ENCODE measurements at regions of chr18 and their contacts with region 1.

Region 1: DNA sequence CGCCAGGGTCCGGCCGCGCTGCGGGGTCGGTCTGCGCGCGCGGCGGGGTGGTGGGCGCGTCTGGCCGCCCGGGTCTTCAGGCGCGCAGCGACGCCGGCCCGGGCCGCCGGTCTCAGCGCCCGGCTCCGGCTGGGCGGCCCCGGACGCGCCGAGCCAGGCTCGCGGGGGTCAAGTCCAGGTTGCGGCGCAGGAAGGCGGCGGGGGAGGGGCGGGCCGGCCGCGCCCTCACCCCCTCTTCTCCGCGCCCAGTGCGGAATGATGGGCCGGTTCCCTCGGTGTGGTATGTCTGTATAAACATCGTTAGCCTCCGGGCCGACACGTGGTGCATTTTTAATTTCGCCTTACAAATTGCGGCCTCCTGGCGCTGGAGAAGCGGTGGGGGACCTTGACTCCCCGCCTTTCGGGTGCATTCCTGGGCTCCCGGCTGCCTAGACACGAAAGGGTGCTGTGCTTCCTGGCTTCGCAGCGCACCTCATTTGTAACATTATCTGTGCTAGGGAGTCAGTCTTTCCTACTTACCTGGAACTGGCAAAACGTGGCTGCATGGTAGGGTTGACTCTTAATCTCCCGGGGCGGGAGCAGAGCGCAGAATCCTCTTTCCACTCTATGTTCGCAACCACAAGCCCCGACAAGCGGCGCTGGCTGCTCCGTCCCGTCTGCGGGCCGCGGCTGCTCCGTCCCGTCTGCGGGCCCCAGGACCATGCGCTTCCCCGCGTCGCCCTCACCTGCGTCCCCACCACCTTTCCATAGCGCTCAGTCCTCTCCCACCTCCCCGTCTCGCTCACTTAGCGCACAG is 69.0 kb downstream of the CTAGE1 start:
- DNase-seq: no peak
- H3K4me3 ChIP-seq: no peak overlapping the region
- H3K4me3 Mint-ChIP-seq: peak overlapping the region; percentile 75 to 90 (median 82)
- H3K27ac ChIP-seq: peak overlapping the region; percentile 21
- H3K27ac Mint-ChIP-seq: peak overlapping the region; percentile 26 to 94 (median 85)
- H3K4me1 ChIP-seq: peaks cover 32% of the 10 kb centered on the region
- H3K4me1 Mint-ChIP-seq: peaks cover 13 to 38% (median 24%) of the 10 kb centered on the region in 4 donors
- H3K27me3 ChIP-seq: no peaks in the 10 kb centered on the region
- H3K27me3 Mint-ChIP-seq: peaks cover 8 to 14% of the 10 kb centered on the region in 2 donors

Region 2: GRCh38 chr18:22282311-22283112 is 66.2 kb before region 1 on chr18:
- CTCF ChIA-PET with region 1: no interaction called
- POLR2A ChIA-PET with region 1: no interaction called
- intact Hi-C with region 1: loop called (anchors 5 kb)
- DNase-seq: peak; percentile 43 to 62 (median 55)
- H3K4me3 ChIP-seq: no peak overlapping the region
- H3K4me3 Mint-ChIP-seq: peak overlapping the region in 3 of 8 donors; percentile 1 to 37 (median 18)
- H3K27ac ChIP-seq: peak overlapping the region; percentile 49
- H3K27ac Mint-ChIP-seq: peak overlapping the region; percentile 68 to 90 (median 80)
- H3K4me1 ChIP-seq: peaks cover 7% of the 10 kb centered on the region
- H3K4me1 Mint-ChIP-seq: peaks cover 0 to 8% (median 3%) of the 10 kb centered on the region in 4 donors
- H3K27me3 ChIP-seq: no peaks in the 10 kb centered on the region
- H3K27me3 Mint-ChIP-seq: no peaks in the 10 kb centered on the region

Region 3: GRCh38 chr18:22314420-22314819 is 34.3 kb before region 1 on chr18:
- CTCF ChIA-PET with region 1: no interaction called
- POLR2A ChIA-PET with region 1: no interaction called
- intact Hi-C with region 1: no loop called
- DNase-seq: no peak
- H3K4me3 ChIP-seq: no peak overlapping the region
- H3K4me3 Mint-ChIP-seq: no peak overlapping the region
- H3K27ac ChIP-seq: no peak overlapping the region
- H3K27ac Mint-ChIP-seq: no peak overlapping the region
- H3K4me1 ChIP-seq: no peaks in the 10 kb centered on the region
- H3K4me1 Mint-ChIP-seq: no peaks in the 10 kb centered on the region
- H3K27me3 ChIP-seq: no peaks in the 10 kb centered on the region
- H3K27me3 Mint-ChIP-seq: no peaks in the 10 kb centered on the region